Endothelial cell of umbilical vein (primary cell): ENCODE measurements at regions of chr1 and their contacts with region 1.

Region 1: DNA sequence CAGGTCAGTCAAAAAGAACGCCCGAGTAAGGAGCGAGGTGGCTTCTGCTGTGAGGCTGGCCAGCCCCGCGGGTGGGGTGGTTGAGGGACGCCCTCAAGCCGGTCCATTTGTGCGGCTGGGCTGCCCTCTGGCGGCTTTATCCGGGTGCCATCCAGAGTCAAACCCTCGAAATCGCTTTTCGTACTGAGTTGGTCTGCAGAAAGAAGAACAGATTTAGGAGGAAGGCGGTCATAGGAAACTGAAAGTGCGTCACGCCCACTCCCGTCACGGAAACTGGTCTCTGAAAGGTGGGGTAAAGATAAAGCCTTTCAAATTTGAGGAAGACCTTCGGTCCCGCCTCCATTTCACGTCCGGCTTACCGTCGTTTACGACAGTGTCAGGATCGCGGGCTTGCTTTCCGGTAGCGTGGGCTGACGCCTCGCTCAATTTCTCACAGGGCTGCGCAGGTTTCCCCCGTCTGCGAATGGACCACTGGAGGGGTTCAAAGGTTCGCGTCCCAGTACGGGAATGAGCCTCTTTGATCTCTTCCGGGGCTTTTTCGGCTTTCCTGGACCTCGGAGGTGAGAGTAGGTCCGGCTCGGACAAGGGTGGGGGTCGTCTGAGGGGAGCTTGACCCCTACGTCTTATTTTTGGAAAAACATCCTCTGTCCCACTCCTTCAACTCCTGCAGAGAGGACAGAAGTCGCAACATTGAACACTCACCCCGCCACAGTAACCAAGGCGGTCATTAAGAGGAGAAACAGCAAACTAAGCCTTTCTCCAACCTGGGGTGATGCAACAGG is at the start of gene HAX1:
- DNase-seq: peak; percentile 97
- H3K4me3 ChIP-seq: peak within 1 kb of the TSS; percentile 79 to 91 (median 81)
- H3K27ac ChIP-seq: peak within 1 kb of the TSS; percentile 69
- H3K4me1 ChIP-seq: peaks cover 15% of the 10 kb centered on the region
- H3K27me3 ChIP-seq: no peaks in the 10 kb centered on the region
- CTCF ChIP-seq: peak; percentile 81
- POLR2A ChIP-seq: peak; percentile 71
- total RNA-seq, gene HAX1: 69.1 and 78.4 TPM in 2 replicates

Region 2: DNA sequence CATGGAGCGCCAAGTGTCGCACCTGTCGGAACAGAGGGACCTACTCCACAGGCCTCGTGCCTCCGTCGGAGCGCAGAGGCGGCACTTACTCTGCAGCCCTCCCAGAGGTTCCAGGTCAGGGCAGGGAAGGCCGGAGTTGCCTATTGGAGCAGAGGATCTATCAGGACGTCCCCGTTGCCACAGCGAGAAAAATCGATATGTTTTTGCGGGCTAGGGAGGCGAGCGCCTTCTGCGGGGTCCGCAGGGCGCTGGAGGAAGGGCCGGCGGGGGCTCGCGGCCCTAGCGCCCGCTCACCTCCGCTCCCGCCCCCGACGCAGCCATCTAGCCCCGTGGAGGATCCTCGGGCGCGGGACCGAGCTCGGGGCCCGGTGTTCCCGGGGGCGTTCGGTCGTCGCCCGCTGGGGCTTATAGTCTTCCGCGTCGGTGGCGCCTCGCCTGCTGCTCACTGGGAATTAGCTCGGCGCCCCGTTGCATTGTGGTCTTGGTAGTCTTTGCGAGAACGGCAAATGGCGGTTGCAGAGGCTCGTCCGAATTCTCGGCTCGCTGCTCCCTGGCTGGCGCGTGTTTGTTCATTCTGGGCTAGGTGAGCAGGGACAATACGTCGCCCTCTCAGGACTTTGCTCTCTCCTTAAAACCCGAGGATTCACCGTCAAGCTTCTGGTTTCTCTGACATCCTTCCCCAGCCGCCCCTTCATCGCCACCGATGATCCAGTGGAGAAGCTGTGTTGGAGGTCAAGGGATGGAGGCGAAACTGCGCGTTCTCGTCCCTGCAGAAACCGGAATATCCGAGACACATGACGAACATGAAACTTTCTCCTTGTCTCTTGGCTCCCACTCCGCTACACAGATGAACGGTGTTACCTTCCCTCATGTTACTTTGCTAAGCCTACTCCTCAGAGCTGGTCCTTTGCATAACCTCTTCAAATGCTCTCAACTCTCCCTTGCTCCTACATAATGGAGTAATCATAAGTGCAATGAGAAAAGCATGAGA is 294.9 kb before region 1 on chr1 and contains the start of gene JTB:
- CTCF ChIA-PET with region 1: no interaction called
- POLR2A ChIA-PET with region 1: no interaction called
- dilution Hi-C with region 1: no loop called
- intact Hi-C with region 1: no loop called
- DNase-seq: peak; percentile 82
- H3K4me3 ChIP-seq: peak within 1 kb of the TSS; percentile 50 to 91 (median 70)
- H3K27ac ChIP-seq: peak within 1 kb of the TSS; percentile 4
- H3K4me1 ChIP-seq: peaks cover 10% of the 10 kb centered on the region
- H3K27me3 ChIP-seq: no peaks in the 10 kb centered on the region
- CTCF ChIP-seq: no peak
- POLR2A ChIP-seq: peak; percentile 94
- total RNA-seq, gene JTB: 89.0 and 90.2 TPM in 2 replicates

Region 3: GRCh38 chr1:154198756-154199562 is 73.4 kb before region 1 on chr1:
- CTCF ChIA-PET with region 1: interaction called, 23 read pairs
- POLR2A ChIA-PET with region 1: interaction called, 10 read pairs
- dilution Hi-C with region 1: no loop called
- intact Hi-C with region 1: loop called (anchors 1 kb)
- DNase-seq: peak; percentile 78
- H3K4me3 ChIP-seq: no peak overlapping the region
- H3K27ac ChIP-seq: no peak overlapping the region
- H3K4me1 ChIP-seq: no peaks in the 10 kb centered on the region
- H3K27me3 ChIP-seq: peaks cover 3 to 4% of the 10 kb centered on the region in 2 experiments
- CTCF ChIP-seq: peak; percentile 31 to 56
- POLR2A ChIP-seq: no peak

Region 4: GRCh38 chr1:154324669-154325582 is 52.5 kb after region 1 on chr1 and contains the start of gene ATP8B2:
- CTCF ChIA-PET with region 1: interaction called, 7 read pairs
- POLR2A ChIA-PET with region 1: no interaction called
- dilution Hi-C with region 1: no loop called
- intact Hi-C with region 1: loop called (anchors 2 kb)
- DNase-seq: peak; percentile 79
- H3K4me3 ChIP-seq: peak within 1 kb of the TSS; percentile 78 to 88 (median 85)
- H3K27ac ChIP-seq: peak within 1 kb of the TSS; percentile 52
- H3K4me1 ChIP-seq: peaks cover 22% of the 10 kb centered on the region
- H3K27me3 ChIP-seq: peaks cover 0 to 8% of the 10 kb centered on the region in 2 experiments
- CTCF ChIP-seq: peak; percentile 93 to 94
- POLR2A ChIP-seq: no peak
- total RNA-seq, gene ATP8B2: 60.0 and 64.7 TPM in 2 replicates

Region 5: GRCh38 chr1:154418062-154418921 is 145.9 kb after region 1 on chr1:
- CTCF ChIA-PET with region 1: no interaction called
- POLR2A ChIA-PET with region 1: no interaction called
- dilution Hi-C with region 1: no loop called
- intact Hi-C with region 1: no loop called
- DNase-seq: peak; percentile 47
- H3K4me3 ChIP-seq: no peak overlapping the region
- H3K27ac ChIP-seq: no peak overlapping the region
- H3K4me1 ChIP-seq: peaks cover 32% of the 10 kb centered on the region
- H3K27me3 ChIP-seq: no peaks in the 10 kb centered on the region
- CTCF ChIP-seq: no peak
- POLR2A ChIP-seq: no peak